AG04449 (cell line): ENCODE measurements at regions of chr1 and their contacts with region 1.

Region 1: DNA sequence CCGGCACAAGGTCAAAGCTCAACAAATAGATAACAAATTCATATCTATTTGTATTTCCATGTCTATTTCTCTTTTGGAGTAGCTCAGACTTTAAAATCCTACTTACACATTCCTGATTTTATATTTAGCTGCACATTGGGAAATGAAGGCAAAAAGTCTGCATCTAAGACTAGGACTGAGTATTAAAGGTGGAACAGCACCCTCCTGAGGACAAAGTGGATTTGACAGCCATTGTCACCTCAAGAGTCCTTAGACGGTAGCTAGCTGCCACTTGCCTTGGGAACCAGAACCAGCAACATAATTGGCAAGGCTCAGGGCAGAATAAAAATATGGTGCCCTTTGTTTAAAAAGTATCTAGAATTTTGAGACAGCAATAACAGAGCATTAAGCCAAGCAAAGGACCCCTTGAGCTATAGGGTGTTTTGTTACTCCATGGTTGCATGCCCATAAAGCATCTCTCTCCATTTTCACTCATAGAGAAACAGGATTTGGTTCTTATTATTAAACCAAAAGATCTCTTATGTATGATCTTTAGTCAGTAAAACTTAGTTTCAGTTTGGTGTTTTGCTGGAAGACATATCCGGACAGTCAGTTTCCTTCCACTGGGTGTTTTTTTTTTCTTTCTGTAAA is 30.0 kb upstream of the SGIP1 start:
- DNase-seq: no peak
- H3K4me3 ChIP-seq: no peak overlapping the region
- CTCF ChIP-seq: peak; percentile 65

Region 2: DNA sequence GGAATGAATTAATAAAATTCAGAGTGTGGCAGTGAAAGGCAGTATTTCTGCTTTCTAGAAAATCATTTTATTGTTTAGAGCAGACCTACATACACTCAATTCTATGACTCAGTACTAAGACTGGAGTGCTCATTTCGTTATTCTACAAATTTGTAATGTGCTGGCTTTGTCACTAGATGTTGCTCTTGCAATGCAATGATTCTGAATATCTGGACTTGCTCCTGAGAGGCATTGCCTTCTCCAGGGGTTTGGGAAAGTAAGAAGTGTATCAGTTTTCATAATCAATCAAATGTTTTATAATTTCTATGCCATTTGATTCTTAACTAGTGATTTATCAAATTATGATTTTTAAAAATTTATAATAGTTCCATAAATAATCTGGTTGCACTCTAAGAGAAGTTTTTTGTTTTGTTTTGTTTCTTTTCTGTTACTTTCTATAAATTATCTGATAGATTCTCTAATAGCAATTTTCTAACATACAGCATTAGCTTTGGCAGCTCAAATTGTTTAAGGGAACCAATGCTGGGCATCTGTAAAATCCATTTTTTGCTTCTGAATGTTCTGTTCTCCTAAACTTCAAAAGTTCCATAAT is 250.5 kb before region 1 on chr1:
- CTCF ChIA-PET with region 1: interaction called, 124 read pairs
- POLR2A ChIA-PET with region 1: no interaction called
- DNase-seq: no peak
- H3K4me3 ChIP-seq: no peak overlapping the region
- CTCF ChIP-seq: peak; percentile 54

Region 3: GRCh38 chr1:66436378-66437145 is 67.4 kb before region 1 on chr1:
- CTCF ChIA-PET with region 1: interaction called, 12 read pairs
- POLR2A ChIA-PET with region 1: interaction called, 3 read pairs
- DNase-seq: peak; percentile 65
- H3K4me3 ChIP-seq: no peak overlapping the region
- CTCF ChIP-seq: peak; percentile 57

Region 4: DNA sequence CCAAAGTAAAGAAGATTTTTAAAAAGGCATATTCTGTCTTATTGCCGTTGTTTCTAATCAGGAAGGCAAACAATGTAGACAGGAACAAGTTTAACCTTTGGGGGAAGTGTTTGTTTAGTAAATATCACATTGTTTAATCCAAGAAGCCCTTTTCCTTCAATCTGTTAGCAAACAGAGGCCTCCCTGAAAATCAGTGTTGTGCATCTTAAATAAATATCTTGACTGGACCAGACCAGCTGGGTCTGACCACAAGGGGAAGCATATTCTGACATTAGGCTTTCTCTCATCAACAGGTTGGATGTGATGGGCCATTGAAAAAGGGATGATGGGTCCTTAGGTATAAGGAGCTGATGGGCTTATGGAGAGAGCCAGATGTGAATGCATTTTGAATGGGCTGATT is 51.8 kb before region 1 on chr1:
- CTCF ChIA-PET with region 1: interaction called, 144 read pairs
- POLR2A ChIA-PET with region 1: no interaction called
- DNase-seq: no peak
- H3K4me3 ChIP-seq: no peak overlapping the region
- CTCF ChIP-seq: no peak

Region 5: DNA sequence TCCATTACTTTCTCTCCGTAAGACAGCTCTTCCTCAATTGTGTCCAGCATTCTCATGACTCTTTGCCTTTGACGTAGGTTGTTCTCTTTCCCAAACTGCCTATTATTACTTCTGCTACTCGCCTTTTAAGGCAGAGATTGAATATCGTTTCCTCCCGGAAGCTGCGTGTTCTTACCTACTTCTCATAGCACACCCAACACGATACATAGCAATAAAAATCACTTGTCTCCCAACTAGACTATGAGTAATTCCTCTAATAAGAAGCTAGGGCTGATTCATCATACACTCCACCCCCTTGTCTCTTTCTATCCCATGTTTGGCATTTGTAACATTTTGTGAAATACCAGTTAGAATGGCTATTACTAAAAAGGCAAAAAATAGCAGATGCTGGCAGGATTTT is 25.8 kb before region 1 on chr1:
- CTCF ChIA-PET with region 1: interaction called, 27 read pairs
- POLR2A ChIA-PET with region 1: interaction called, 5 read pairs
- DNase-seq: peak; percentile 92
- H3K4me3 ChIP-seq: no peak overlapping the region
- CTCF ChIP-seq: no peak

Region 6: DNA sequence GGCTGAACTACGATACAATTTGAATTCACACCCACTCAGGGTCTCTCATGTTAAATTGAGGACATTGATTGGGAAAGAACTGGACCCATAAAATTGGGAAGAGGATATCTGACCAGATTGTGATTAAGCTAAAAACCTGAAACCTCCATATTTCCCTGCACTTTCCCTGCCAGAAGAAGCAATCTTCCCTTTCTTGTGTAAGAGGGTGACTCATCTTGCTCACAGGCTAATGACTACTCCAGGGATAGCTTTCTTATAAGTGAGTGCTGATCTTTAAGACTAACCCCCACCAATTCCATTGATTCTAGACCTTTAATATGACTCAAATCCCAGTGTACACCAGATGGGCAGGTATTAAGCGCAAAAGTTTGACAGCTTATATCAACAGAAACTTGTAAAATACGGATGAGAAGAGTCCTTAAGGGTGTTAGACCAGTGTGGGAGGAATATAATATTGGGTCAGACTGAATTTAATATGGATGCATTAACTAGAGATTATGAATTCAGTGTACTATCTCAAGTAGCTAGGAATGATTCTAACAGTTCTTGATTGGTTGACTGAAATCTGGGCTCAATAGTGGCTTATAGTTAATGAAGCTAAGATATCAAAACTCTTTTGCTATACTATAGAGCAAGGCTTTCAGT is 17.9 kb after region 1 on chr1:
- CTCF ChIA-PET with region 1: interaction called, 45 read pairs
- POLR2A ChIA-PET with region 1: interaction called, 3 read pairs
- DNase-seq: peak; percentile 73
- H3K4me3 ChIP-seq: no peak overlapping the region
- CTCF ChIP-seq: no peak

Region 7: GRCh38 chr1:66725885-66726665 is 222.1 kb after region 1 on chr1:
- CTCF ChIA-PET with region 1: interaction called, 28 read pairs
- POLR2A ChIA-PET with region 1: no interaction called
- DNase-seq: peak; percentile 24
- H3K4me3 ChIP-seq: no peak overlapping the region
- CTCF ChIP-seq: peak; percentile 78